SK-N-SH (cell line): ENCODE measurements at regions of chr6 and their contacts with region 1.

Region 1: DNA sequence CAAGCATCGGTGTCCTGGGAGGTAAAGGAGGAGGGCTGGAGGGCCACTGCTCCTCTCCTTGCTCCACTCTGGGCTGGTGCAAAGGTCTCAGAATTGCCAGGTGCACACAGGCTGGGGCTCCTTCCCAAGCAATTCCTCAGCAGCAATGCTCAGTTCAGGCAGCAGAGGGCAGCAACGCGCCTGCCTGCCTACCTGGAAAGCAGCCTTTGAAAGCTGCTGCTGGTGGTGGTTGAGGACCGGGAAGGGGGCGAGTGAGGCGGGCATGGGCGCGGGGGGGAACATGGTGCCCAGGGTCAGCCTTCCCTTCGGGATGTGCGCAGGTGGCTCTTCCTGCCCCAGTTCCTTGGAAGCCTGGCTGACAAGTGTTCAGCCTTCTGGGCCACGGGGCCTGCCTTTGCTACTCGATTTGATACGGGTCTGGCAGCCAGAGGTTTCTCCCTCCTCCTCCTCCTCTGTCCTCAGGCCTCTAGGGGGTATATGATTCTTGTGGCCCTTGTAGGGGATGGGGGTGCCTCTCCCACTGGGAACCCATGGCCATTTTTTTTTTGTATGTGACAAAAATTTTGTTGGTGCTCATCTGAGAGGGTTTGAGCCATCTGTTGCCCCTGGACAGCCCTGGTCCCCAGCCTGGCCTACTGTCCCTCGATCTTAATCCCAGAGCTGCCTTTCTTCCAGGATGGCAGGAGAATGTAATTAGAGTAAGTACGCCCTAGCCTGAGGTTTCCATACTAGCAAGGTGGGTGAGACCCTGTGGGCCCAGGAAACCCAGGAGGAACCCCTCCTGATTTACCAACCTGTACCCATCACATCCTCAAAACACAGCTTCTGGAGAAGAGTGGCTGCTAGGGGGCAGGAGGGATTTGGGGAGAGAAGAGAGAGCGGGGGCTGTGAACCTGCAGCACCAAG is 20.1 kb downstream of the MRPS18A start:
- DNase-seq: peak; percentile 88
- H3K4me3 ChIP-seq: peak overlapping the region in 1 of 2 experiments; percentile 33; a peak in 2 of 4 replicates
- H3K27ac ChIP-seq: peak overlapping the region in 1 of 2 experiments; percentile 31; a peak in 1 of 4 replicates
- H3K4me1 ChIP-seq: peaks cover 0 to 29% of the 10 kb centered on the region in 2 experiments; a peak in 1 of 4 replicates
- H3K27me3 ChIP-seq: no peaks in the 10 kb centered on the region
- CTCF ChIP-seq: peak; percentile 89
- EP300 ChIP-seq: no peak
- RAD21 ChIP-seq: peak; percentile 86

Region 2: GRCh38 chr6:43613721-43614393 is 53.6 kb before region 1 on chr6:
- CTCF ChIA-PET with region 1: interaction called, 19 read pairs
- POLR2A ChIA-PET with region 1: no interaction called
- DNase-seq: no peak
- H3K4me3 ChIP-seq: no peak overlapping the region
- H3K27ac ChIP-seq: no peak overlapping the region
- H3K4me1 ChIP-seq: no peaks in the 10 kb centered on the region; a peak in 1 of 4 replicates
- H3K27me3 ChIP-seq: no peaks in the 10 kb centered on the region
- CTCF ChIP-seq: no peak
- EP300 ChIP-seq: no peak
- RAD21 ChIP-seq: no peak

Region 3: DNA sequence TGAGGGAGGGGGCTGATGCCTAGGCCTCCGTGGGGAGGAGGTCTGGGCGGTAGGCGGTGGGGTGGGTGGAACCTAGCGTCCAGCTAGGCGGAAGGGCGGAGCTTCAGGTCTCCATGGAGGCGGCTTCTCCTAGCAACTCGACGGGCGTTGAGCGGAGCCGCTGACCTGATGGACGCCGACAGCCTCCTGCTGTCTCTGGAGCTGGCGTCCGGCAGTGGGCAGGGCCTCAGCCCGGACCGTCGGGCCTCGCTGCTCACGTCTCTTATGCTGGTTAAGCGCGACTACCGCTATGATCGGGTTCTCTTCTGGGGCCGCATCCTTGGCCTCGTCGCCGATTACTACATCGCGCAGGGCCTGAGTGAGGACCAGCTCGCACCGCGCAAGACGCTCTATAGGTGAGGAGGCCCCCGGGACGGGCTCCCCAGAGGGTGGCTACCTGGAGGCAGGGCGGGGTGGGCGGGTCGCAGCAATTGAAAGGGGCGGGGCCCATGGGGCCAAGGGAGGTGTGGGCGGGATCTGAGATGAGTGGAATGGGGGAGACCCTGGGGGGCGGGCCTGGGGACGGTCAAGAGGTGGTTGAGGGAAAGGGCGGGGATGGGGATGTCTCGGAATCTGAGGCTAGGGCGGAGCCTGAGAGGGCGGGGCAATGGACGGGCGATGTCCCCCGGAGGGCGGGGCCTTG is 22.4 kb before region 1 on chr6 and contains the start of gene RSPH9:
- CTCF ChIA-PET with region 1: interaction called, 10 read pairs
- POLR2A ChIA-PET with region 1: interaction called, 4 read pairs
- DNase-seq: peak; percentile 77
- H3K4me3 ChIP-seq: peak within 1 kb of the TSS; percentile 26 to 29; a peak in 3 of 4 replicates
- H3K27ac ChIP-seq: no peak within 1 kb of the TSS
- H3K4me1 ChIP-seq: peaks cover 5% of the 10 kb centered on the region in 2 experiments; a peak in 2 of 4 replicates
- H3K27me3 ChIP-seq: no peaks in the 10 kb centered on the region
- CTCF ChIP-seq: no peak
- EP300 ChIP-seq: no peak
- RAD21 ChIP-seq: no peak
- polyA plus RNA-seq, gene RSPH9: 0.05 and 0.06 TPM in 2 replicates

Region 4: DNA sequence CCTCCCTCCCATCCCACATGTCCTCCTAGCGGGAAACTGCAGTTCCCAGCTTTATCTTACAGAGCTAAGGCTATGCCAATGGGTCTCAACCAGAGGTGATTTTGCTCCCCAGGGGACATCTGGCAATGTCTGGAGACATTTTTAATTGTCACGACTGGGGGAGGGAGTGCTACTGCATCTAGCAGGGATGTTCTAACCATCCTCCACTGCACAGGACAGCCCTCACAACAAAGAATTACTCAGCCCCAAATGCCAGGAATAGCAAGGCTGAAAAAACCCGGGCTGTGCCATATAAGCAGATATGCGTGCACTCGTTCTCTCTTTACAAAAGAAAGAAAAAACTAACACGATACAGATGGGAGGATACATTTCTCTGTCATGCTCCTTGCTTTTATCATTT is 11.6 kb after region 1 on chr6:
- CTCF ChIA-PET with region 1: interaction called, 41 read pairs
- POLR2A ChIA-PET with region 1: interaction called, 4 read pairs
- DNase-seq: no peak
- H3K4me3 ChIP-seq: no peak overlapping the region
- H3K27ac ChIP-seq: no peak overlapping the region
- H3K4me1 ChIP-seq: peaks cover 0 to 5% of the 10 kb centered on the region in 2 experiments; a peak in 1 of 4 replicates
- H3K27me3 ChIP-seq: no peaks in the 10 kb centered on the region
- CTCF ChIP-seq: no peak
- EP300 ChIP-seq: no peak
- RAD21 ChIP-seq: no peak

Region 5: GRCh38 chr6:43714311-43715055 is 47.0 kb after region 1 on chr6:
- CTCF ChIA-PET with region 1: interaction called, 12 read pairs
- POLR2A ChIA-PET with region 1: no interaction called
- DNase-seq: peak; percentile 81
- H3K4me3 ChIP-seq: no peak overlapping the region
- H3K27ac ChIP-seq: no peak overlapping the region
- H3K4me1 ChIP-seq: peaks cover 0 to 39% of the 10 kb centered on the region in 2 experiments; a peak in 1 of 4 replicates
- H3K27me3 ChIP-seq: peaks cover 9% of the 10 kb centered on the region; the same call in 1 of the 2 replicates
- CTCF ChIP-seq: no peak
- EP300 ChIP-seq: no peak; a peak in 1 of 4 replicates
- RAD21 ChIP-seq: no peak

Region 6: DNA sequence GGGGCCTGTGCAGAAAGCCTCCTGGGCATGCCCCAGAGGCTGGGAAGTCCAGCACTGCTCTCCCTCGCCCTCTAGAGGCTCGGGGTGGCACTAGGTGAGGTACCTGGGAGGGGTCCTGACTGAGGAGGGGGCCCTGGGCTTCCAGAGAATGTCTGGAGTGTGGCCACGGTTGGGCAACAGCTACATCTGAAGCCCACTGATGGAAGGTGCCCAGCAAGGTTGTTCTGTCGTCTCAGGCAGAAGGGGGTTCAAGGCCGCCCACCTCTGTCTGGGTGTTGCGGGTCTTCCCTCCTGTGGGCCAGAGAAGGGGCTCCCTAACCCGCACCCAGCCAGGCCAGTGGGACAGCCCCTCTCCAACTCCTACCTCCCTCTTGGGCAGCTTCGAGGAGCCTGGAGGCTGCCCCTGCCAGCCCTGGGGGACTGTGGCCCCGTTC is 91.1 kb after region 1 on chr6:
- CTCF ChIA-PET with region 1: interaction called, 13 read pairs
- POLR2A ChIA-PET with region 1: no interaction called
- DNase-seq: peak; percentile 67
- H3K4me3 ChIP-seq: no peak overlapping the region; a peak in 1 of 4 replicates
- H3K27ac ChIP-seq: no peak overlapping the region
- H3K4me1 ChIP-seq: peaks cover 0 to 12% of the 10 kb centered on the region in 2 experiments; a peak in 1 of 4 replicates
- H3K27me3 ChIP-seq: peaks cover 11% of the 10 kb centered on the region; the same call in 1 of the 2 replicates
- CTCF ChIP-seq: peak; percentile 60
- EP300 ChIP-seq: no peak
- RAD21 ChIP-seq: peak; percentile 50